ENCODE measurements at regions of chr14 and their contacts with region 1.

Region 1: DNA sequence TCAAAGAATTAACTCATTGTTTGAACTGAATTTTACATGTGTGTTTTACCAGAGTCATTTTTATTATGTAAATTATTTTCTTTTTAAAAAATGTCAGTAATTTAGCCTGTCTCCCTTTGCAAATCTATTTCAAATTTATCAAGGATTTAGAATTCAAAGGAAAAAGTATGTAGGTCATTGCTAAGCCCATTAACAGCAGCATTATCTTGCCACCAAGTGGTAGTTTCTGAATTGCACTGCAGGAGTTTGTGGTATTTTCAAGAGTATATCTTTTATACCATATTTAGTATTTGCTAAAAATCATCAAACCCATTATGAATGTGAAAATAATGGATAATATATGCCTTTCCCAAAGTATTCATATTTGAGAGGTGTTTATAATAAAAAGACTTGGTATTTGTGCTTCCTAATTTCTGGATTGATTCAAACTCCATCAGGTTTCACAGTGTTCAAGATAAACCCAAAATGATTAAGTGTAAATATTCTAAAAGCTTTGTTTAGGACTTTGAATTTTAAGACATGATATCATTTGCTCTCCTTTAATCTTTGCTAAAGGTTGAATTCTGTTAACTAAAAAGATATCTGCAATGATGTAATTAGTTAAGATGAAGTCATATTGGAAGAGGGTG is 711.4 kb downstream of the FSCB start:
- DNase-seq: peak; percentile 35
- H3K4me3 Mint-ChIP-seq: no peak overlapping the region
- H3K27ac Mint-ChIP-seq: no peak overlapping the region
- H3K4me1 Mint-ChIP-seq: no peaks in the 10 kb centered on the region
- H3K27me3 Mint-ChIP-seq: no peaks in the 10 kb centered on the region
- CTCF ChIP-seq: peak; percentile 61

Region 2: DNA sequence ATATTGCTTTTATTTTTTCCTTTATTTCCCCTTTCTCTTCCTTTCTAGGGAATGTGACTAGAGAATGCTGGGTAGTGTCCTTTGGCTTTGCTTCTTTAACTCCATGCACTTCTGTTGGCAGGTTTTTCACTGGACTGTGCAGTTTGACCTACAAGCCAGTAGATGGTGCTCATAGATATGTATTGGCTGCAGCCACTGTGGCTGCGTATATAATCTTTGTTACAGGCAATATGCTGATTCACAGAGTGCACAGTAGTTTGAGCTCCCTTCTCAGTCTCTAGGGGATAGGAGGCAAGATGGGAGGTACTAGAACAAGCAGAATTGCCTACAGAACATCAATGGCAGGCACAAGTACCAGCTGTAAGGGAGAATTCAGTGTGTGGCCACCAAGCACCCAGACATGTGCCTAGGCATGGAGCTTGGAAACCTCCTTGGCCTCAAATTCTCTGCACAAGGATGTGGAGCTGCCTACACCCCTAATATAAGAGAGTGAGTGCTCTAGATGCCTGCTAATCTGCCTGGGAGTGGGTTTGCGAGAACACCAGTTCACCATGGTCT is 1685.5 kb before region 1 on chr14:
- CTCF ChIA-PET with region 1: no interaction called
- POLR2A ChIA-PET with region 1: no interaction called
- intact Hi-C with region 1: loop called (anchors 5 kb)
- DNase-seq: peak; percentile 56
- H3K4me3 Mint-ChIP-seq: no peak overlapping the region
- H3K27ac Mint-ChIP-seq: no peak overlapping the region
- H3K4me1 Mint-ChIP-seq: peaks cover 5% of the 10 kb centered on the region
- H3K27me3 Mint-ChIP-seq: no peaks in the 10 kb centered on the region
- CTCF ChIP-seq: peak; percentile 52

Region 3: DNA sequence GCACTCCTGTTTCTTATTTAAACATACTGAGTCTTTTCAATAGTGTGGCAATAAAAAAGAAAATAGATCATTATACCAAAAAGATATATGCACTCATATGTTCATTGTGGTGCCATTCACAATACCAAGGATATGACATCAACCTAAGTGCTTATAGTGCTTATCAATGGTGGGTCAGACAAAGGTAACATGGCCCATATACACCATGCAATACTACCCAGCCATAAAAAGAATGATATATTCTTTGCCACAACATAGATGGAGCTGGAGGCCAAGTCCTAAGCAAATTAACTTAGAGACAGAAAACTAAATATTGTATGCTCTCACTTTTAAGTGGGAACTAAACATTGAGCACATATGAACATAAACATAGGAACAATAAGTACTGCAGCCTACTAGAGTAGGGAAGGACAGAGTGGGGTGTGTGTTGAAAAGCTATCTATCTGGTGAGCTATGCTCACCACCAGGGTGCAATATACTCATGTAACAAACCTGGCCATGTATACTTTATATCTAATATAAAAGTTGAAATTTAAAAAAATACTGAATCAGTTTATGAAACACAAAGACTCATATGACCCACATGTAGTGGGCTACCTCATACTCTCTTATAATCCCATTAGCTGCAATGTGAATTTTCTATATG is 884.2 kb before region 1 on chr14:
- CTCF ChIA-PET with region 1: no interaction called
- POLR2A ChIA-PET with region 1: no interaction called
- intact Hi-C with region 1: loop called (anchors 2 kb)
- DNase-seq: peak; percentile 17
- H3K4me3 Mint-ChIP-seq: no peak overlapping the region
- H3K27ac Mint-ChIP-seq: no peak overlapping the region
- H3K4me1 Mint-ChIP-seq: no peaks in the 10 kb centered on the region
- H3K27me3 Mint-ChIP-seq: no peaks in the 10 kb centered on the region
- CTCF ChIP-seq: peak; percentile 13

Region 4: DNA sequence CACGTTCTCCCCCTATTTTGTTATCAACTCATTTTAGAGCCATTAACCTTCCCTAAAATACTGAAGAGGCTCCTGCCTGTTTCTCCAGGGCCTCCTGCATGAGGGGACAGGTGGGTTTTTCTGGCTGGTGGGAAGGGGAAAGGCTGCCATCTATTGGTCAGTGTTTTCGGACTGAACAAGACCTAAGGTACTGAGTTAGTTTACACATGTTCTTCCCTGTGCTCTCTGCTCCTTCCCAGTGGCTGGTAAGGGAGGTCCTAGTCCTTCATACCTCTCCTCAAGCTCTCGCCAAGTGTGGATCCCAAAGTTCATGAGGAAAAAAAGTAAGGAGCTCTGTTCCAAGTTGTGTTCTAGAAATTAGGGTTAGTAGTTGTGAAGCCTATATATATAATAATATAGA is 353.9 kb after region 1 on chr14:
- CTCF ChIA-PET with region 1: interaction called, 11 read pairs
- POLR2A ChIA-PET with region 1: interaction called, 4 read pairs
- intact Hi-C with region 1: no loop called
- DNase-seq: peak; percentile 68
- H3K4me3 Mint-ChIP-seq: no peak overlapping the region
- H3K27ac Mint-ChIP-seq: no peak overlapping the region
- H3K4me1 Mint-ChIP-seq: no peaks in the 10 kb centered on the region
- H3K27me3 Mint-ChIP-seq: no peaks in the 10 kb centered on the region
- CTCF ChIP-seq: peak; percentile 72

Region 5: DNA sequence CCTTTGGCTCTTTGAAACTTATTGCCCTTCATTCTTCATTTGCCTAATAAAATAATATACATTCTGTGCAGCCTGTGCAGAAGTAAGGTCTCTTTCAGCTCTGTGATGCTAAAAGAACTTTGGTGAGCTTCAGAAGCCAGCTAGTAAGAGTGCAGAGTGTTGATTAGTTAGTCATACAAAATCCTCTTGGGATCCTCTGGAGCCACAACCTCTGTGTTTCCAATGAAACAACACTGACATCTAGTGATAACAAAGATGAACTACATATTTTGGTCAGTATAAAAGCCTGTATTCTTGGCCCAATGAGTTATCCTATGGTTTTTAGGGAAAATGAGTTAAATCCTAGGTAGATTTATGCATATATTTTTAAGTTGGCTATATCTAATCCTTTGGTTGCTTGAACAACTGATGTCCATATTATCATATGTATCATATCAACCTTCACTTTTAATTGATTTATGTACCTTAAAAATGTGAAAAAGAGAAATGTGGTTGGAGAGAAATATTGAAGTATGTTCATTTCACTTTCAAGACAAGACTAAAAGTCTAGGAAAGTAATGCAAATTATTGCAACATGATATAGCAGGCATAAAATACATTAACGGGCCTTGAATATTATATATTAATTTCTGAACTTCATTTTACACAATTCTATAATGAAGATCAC is 1007.7 kb after region 1 on chr14:
- CTCF ChIA-PET with region 1: interaction called, 3 read pairs
- POLR2A ChIA-PET with region 1: no interaction called
- intact Hi-C with region 1: loop called (anchors 5 kb)
- DNase-seq: peak; percentile 66
- H3K4me3 Mint-ChIP-seq: no peak overlapping the region
- H3K27ac Mint-ChIP-seq: no peak overlapping the region
- H3K4me1 Mint-ChIP-seq: no peaks in the 10 kb centered on the region
- H3K27me3 Mint-ChIP-seq: no peaks in the 10 kb centered on the region
- CTCF ChIP-seq: peak; percentile 79